Activated CD4-positive, alpha-beta memory T cell treated with anti-CD3 and anti-CD28 coated beads for 36 hours (primary cell): ENCODE measurements at regions of chr7 and their contacts with region 1.

Region 1: DNA sequence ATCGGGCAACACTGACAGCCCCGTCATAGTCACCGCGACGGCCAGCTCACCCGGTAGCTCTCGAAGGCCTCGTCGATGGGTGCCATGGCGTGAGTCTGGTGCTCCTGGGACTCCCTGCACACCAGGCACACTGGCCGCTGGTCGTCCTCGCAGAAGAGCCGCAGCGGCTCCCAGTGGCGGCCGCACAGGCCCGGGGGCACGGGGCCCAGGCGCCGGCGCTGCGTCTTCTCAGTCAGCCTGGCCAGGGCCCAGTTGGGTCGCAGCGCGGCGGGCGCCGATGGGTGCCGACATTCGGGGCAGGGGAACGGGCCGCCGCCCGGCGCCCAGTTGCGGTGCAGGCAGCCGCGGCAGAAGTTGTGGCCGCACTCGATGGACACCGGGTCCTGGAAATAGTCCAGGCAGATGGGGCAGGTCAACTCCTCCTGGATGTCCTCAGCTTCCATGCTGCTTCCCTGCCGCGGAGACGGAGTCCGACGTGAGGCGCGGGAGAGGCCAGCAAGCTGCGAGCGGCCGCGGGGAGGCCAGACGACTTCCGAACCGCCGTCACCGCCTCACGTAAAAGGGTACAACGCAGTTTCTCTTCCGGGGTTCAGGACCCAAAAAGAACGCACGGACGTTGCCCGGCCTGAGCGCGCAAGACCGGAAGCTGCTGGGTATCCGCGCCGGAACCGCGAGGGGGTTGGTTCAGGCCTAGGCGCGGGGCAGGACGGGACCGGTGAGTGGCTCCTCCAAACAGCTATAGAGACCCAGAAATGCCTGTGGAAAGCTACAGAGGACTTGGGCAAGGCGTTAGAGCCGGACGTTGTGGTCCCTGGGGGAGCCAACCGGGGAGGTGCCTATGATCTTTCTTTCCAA is at the start of gene TRIM4:
- DNase-seq: peak; percentile 96
- H3K4me3 Mint-ChIP-seq: peak within 1 kb of the TSS; percentile 98
- H3K27ac Mint-ChIP-seq: peak within 1 kb of the TSS; percentile 98
- H3K4me1 Mint-ChIP-seq: peaks cover 43% of the 10 kb centered on the region
- H3K27me3 Mint-ChIP-seq: no peaks in the 10 kb centered on the region
- total RNA-seq, gene TRIM4: 24.9 to 26.1 TPM

Region 2: GRCh38 chr7:99472561-99473243 is 446.5 kb before region 1 on chr7 and contains the start of gene ZNF789:
- CTCF ChIA-PET with region 1: no interaction called
- POLR2A ChIA-PET with region 1: no interaction called
- intact Hi-C with region 1: loop called (anchors 10 kb)
- DNase-seq: peak; percentile 99
- H3K4me3 Mint-ChIP-seq: peak within 1 kb of the TSS; percentile 100
- H3K27ac Mint-ChIP-seq: peak within 1 kb of the TSS; percentile 88
- H3K4me1 Mint-ChIP-seq: peaks cover 33% of the 10 kb centered on the region
- H3K27me3 Mint-ChIP-seq: no peaks in the 10 kb centered on the region
- total RNA-seq, gene ZNF789: 14.2 to 15.6 TPM

Region 3: DNA sequence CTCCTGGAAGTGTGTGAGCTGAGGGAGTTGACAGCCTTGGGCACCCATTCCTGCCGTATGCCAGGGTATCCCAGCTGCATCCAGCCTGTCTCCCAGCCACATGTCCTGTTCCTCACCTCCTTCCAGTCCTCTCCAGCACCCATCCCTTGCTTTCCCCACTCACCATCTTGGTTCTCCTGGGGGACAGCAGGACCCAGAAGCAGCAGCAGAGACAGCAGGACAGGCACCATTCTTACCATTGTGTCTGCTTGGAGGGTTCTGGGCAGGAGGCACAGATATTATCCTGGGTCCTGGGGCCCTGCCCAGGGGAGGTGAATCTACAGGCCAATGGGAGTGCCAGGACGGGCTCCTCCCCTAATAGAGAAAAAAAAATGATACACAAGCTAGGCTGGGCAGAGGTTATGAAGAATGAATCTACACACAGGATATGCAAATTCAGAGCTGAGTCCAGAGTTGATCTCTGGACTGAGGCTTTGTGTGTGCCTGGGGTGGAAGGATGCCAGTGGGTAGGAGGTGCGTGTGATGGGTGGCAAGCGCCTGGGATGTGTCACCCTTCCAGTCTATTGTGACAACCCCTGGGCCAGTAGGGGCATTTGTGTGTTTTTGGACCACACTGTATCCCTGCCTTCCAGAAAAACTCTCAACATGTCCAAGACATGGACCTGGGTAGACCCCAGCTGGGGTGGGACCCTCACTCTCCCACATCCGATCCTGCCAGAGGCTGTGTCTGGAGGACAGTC is 56.8 kb after region 1 on chr7 and contains the start of gene AZGP1:
- CTCF ChIA-PET with region 1: interaction called, 22 read pairs
- POLR2A ChIA-PET with region 1: interaction called, 3 read pairs
- intact Hi-C with region 1: no loop called
- DNase-seq: no peak
- H3K4me3 Mint-ChIP-seq: no peak within 1 kb of the TSS
- H3K27ac Mint-ChIP-seq: no peak within 1 kb of the TSS
- H3K4me1 Mint-ChIP-seq: no peaks in the 10 kb centered on the region
- H3K27me3 Mint-ChIP-seq: no peaks in the 10 kb centered on the region
- total RNA-seq, gene AZGP1: not detected

Region 4: DNA sequence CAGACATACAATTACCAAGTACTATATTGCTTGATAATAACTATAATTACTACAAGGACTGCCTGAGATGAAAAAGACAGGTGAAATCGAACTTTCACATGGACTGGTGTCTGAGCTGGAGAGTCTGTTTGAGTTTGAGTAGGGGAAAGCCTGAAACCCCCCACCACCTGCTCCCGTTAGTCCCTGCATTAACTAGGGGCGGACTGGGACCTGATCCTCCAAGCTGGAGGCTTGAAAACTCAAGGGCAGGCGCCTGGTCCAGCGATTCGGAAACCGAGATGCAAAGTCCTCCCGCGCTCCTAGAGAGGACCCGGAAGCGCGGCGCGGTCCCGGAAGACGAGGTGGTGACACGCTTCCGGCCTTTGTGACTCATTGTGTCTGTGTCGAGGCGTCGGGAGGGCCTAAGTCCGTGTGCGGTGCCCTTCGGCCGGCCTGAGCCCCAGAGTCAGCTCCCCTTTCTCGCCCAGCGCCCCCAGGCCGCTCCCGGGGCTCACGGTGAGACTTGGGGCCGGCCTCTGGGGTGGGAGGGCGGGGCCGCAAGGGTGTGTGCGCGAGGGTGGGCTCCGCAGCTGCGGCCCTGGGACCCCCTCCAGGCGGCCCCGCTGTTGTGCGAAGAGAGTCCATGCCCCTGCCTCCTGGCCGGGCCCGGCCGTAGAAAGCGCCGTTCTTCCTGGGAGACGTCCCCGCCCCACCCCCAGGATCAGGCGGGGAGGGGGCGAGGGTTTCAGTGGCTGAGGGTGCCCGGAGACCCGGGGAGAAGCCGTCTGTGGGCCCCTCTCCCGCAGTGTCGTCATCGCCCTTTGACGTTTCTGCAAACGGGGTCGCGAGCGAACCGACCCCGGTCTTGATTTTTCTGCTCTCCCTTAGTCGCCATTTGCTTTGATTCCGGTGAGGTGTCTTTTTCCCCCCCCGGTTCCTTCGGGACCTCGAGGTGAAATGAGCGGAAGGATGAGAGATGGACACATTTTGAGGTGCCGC is 96.3 kb after region 1 on chr7 and contains the start of gene ZKSCAN1:
- CTCF ChIA-PET with region 1: no interaction called
- POLR2A ChIA-PET with region 1: interaction called, 14 read pairs
- intact Hi-C with region 1: no loop called
- DNase-seq: peak; percentile 91
- H3K4me3 Mint-ChIP-seq: peak within 1 kb of the TSS; percentile 92
- H3K27ac Mint-ChIP-seq: peak within 1 kb of the TSS; percentile 94
- H3K4me1 Mint-ChIP-seq: peaks cover 47% of the 10 kb centered on the region
- H3K27me3 Mint-ChIP-seq: no peaks in the 10 kb centered on the region
- total RNA-seq, gene ZKSCAN1: 49.1 to 50.6 TPM

Region 5: DNA sequence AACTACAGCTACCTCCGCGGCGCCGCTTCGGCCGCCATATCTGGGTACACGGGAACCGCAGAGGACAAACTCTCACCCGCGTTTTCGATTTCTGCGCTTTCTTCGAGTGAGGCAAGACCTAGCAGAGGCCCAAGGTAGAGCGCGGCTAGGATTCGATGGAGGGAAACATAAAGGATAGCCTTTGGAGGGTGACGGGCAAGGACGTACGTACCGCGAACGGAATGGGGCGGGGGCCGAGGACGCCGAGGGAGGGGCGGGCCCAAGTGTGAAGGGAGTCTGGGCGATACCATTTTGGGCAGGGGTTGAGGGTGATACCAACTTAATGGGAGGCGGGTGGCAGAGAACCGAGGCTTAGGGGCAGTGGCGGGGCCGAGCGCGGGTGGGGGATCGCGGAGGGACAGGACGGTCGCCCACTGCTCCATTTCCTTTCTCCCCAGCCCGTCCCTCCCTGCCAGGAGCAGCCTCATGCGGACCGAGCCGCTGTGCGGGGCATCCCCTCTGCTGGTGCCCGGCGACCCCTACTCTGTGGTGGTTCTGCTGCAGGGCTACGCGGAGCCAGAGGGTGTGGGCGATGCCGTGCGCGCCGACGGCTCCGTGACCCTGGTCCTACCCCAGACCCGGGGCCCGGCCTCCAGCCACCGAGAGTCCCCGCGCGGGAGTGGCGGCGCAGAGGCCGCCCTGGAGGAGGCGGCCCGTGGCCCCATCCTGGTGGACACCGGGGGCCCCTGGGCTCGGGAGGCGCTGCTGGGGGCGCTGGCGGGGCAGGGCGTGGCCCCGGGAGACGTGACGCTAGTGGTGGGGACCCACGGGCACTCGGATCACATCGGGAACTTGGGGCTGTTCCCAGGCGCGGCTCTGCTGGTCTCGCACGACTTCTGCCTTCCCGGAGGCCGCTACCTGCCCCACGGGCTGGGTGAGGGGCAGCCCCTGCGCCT is 208.0 kb after region 1 on chr7 and contains the start of gene MBLAC1:
- CTCF ChIA-PET with region 1: interaction called, 7 read pairs
- POLR2A ChIA-PET with region 1: no interaction called
- intact Hi-C with region 1: loop called (anchors 2 kb)
- DNase-seq: peak; percentile 93
- H3K4me3 Mint-ChIP-seq: peak within 1 kb of the TSS; percentile 95
- H3K27ac Mint-ChIP-seq: peak within 1 kb of the TSS; percentile 96
- H3K4me1 Mint-ChIP-seq: peaks cover 28% of the 10 kb centered on the region
- H3K27me3 Mint-ChIP-seq: no peaks in the 10 kb centered on the region
- total RNA-seq, gene MBLAC1: 2.3 to 3.4 TPM